ENCODE measurements at regions of chr5 and their contacts with region 1.

Region 1: GRCh38 chr5:124748687-124749594 is 2.5 kb upstream of the ZNF608 start:
- DNase-seq: peak; percentile 91
- ATAC-seq: peak; percentile 79
- H3K4me3 ChIP-seq: peak overlapping the region; percentile 67
- H3K27ac ChIP-seq: peak overlapping the region; percentile 86
- H3K4me1 ChIP-seq: no peaks in the 10 kb centered on the region
- H3K27me3 ChIP-seq: no peaks in the 10 kb centered on the region
- CTCF ChIP-seq: no peak
- POLR2A ChIP-seq: no peak
- RAD21 ChIP-seq: 0 out of 2 replicates have a peak, but pooled peaks have one; percentile 10

Region 2: DNA sequence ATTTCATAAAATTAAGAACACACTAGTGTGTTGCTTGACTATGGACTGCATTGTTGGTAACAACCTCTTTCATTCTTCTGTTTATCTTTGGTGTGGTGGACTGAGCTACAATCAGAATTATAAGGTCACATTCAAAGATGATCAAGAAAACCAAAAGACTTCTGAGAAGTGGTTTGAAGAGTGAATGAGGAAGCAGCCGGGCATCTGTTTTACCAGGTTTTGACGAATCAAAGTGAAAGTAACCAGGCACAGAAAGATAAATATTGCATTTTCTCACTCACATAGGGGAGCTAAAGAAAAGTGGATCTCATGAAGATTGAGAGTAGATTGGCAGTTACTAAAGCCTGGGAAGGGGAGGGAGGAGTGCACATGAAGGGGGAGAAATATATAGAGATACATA is 591.6 kb before region 1 on chr5:
- CTCF ChIA-PET with region 1: no interaction called
- POLR2A ChIA-PET with region 1: no interaction called
- dilution Hi-C with region 1: no loop called
- in situ Hi-C with region 1: no loop called
- intact Hi-C with region 1: loop called (anchors 10 kb)
- DNase-seq: no peak
- ATAC-seq: no peak
- H3K4me3 ChIP-seq: peak overlapping the region; percentile 51; the same call in 1 of the 2 replicates
- H3K27ac ChIP-seq: no peak overlapping the region
- H3K4me1 ChIP-seq: no peaks in the 10 kb centered on the region
- H3K27me3 ChIP-seq: no peaks in the 10 kb centered on the region
- CTCF ChIP-seq: no peak
- POLR2A ChIP-seq: no peak
- RAD21 ChIP-seq: no peak

Region 3: GRCh38 chr5:124419531-124419930 is 329.4 kb before region 1 on chr5:
- CTCF ChIA-PET with region 1: no interaction called
- POLR2A ChIA-PET with region 1: no interaction called
- dilution Hi-C with region 1: no loop called
- in situ Hi-C with region 1: no loop called
- intact Hi-C with region 1: no loop called
- DNase-seq: no peak
- ATAC-seq: no peak
- H3K4me3 ChIP-seq: no peak overlapping the region
- H3K27ac ChIP-seq: no peak overlapping the region
- H3K4me1 ChIP-seq: no peaks in the 10 kb centered on the region
- H3K27me3 ChIP-seq: peaks cover 4% of the 10 kb centered on the region; the same call in 1 of the 2 replicates
- CTCF ChIP-seq: no peak
- POLR2A ChIP-seq: no peak
- RAD21 ChIP-seq: no peak

Region 4: GRCh38 chr5:124519396-124519795 is 229.5 kb before region 1 on chr5:
- CTCF ChIA-PET with region 1: no interaction called
- POLR2A ChIA-PET with region 1: no interaction called
- dilution Hi-C with region 1: no loop called
- in situ Hi-C with region 1: no loop called
- intact Hi-C with region 1: loop called (anchors 10 kb)
- DNase-seq: peak; percentile 86
- ATAC-seq: peak; percentile 85
- H3K4me3 ChIP-seq: no peak overlapping the region
- H3K27ac ChIP-seq: no peak overlapping the region
- H3K4me1 ChIP-seq: peaks cover 5% of the 10 kb centered on the region
- H3K27me3 ChIP-seq: peaks cover under 1% of the 10 kb centered on the region
- CTCF ChIP-seq: no peak
- POLR2A ChIP-seq: no peak
- RAD21 ChIP-seq: no peak

Region 5: GRCh38 chr5:124923131-124923530 is 174.2 kb after region 1 on chr5:
- CTCF ChIA-PET with region 1: no interaction called
- POLR2A ChIA-PET with region 1: interaction called, 15 read pairs
- dilution Hi-C with region 1: no loop called
- in situ Hi-C with region 1: no loop called
- intact Hi-C with region 1: no loop called
- DNase-seq: peak; percentile 24
- ATAC-seq: no peak
- H3K4me3 ChIP-seq: no peak overlapping the region
- H3K27ac ChIP-seq: no peak overlapping the region
- H3K4me1 ChIP-seq: no peaks in the 10 kb centered on the region; the same call in 1 of the 2 replicates
- H3K27me3 ChIP-seq: no peaks in the 10 kb centered on the region
- CTCF ChIP-seq: no peak
- POLR2A ChIP-seq: no peak
- RAD21 ChIP-seq: no peak

Region 6: GRCh38 chr5:125245216-125245615 is 496.3 kb after region 1 on chr5:
- CTCF ChIA-PET with region 1: no interaction called
- POLR2A ChIA-PET with region 1: no interaction called
- dilution Hi-C with region 1: no loop called
- in situ Hi-C with region 1: no loop called
- intact Hi-C with region 1: loop called (anchors 10 kb)
- DNase-seq: no peak
- ATAC-seq: no peak
- H3K4me3 ChIP-seq: no peak overlapping the region
- H3K27ac ChIP-seq: no peak overlapping the region
- H3K4me1 ChIP-seq: no peaks in the 10 kb centered on the region
- H3K27me3 ChIP-seq: no peaks in the 10 kb centered on the region
- CTCF ChIP-seq: no peak
- POLR2A ChIP-seq: no peak
- RAD21 ChIP-seq: no peak

Region 7: DNA sequence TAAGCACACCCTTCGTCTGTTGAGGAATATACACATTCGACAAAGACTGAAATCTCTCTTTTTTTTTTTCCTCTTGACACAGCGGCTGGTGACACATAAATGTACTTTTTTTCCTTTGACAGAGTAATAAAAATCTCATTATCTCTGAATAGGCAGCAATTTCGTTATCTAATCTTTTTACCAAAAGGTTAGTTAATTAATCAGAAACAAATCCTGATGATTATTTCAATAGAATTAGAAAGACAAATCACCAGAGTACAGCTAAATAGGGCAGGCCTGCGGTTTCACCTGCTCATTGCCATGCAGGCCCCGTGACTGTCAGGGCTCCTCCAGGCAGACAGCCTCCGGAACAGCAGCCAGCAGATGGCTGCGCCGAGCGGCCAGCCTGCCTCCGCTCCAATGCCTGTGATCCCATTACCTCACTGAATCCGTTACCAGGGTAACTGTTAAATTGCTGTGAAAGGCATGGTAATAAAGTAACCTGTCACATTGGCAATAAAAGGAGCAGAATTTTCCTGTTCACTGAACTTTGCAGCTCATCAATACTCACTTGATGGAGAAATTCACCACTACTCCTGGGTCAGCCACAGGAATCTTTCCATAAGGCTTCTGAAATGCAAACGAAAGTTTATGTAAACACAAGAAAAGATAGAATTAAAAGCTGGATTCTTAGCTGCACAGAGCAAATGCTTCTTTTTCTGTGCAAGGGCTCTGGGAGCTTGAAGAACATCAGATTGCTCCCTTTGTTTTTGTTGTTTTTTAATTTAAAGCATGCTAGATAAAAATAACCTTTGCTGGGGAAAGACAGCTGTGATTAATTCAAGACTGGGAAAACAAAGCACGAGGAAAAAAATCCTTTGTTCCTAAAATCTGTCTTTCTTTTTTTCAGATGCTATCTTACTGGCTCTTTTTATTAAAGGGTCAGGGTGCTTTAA is 663.9 kb after region 1 on chr5:
- CTCF ChIA-PET with region 1: no interaction called
- POLR2A ChIA-PET with region 1: no interaction called
- dilution Hi-C with region 1: no loop called
- in situ Hi-C with region 1: loop called (anchors 10 kb)
- intact Hi-C with region 1: loop called (anchors 2 kb)
- DNase-seq: peak; percentile 91
- ATAC-seq: peak; percentile 84
- H3K4me3 ChIP-seq: peak overlapping the region; percentile 10; the same call in 1 of the 2 replicates
- H3K27ac ChIP-seq: no peak overlapping the region
- H3K4me1 ChIP-seq: peaks cover 20% of the 10 kb centered on the region
- H3K27me3 ChIP-seq: no peaks in the 10 kb centered on the region
- CTCF ChIP-seq: peak; percentile 42
- POLR2A ChIP-seq: no peak
- RAD21 ChIP-seq: peak; percentile 55

Region 8: GRCh38 chr5:125835293-125836172 is 1086.6 kb after region 1 on chr5:
- CTCF ChIA-PET with region 1: interaction called, 3 read pairs
- POLR2A ChIA-PET with region 1: no interaction called
- dilution Hi-C with region 1: no loop called
- in situ Hi-C with region 1: no loop called
- intact Hi-C with region 1: loop called (anchors 2 kb)
- DNase-seq: peak; percentile 40
- ATAC-seq: peak; percentile 61; the same call in 1 of the 2 replicates
- H3K4me3 ChIP-seq: no peak overlapping the region
- H3K27ac ChIP-seq: no peak overlapping the region
- H3K4me1 ChIP-seq: no peaks in the 10 kb centered on the region
- H3K27me3 ChIP-seq: no peaks in the 10 kb centered on the region; the same call in 1 of the 2 replicates
- CTCF ChIP-seq: peak; percentile 46
- POLR2A ChIP-seq: no peak
- RAD21 ChIP-seq: peak; percentile 65